ENCODE measurements at regions of chr19 and their contacts with region 1.

Region 1: DNA sequence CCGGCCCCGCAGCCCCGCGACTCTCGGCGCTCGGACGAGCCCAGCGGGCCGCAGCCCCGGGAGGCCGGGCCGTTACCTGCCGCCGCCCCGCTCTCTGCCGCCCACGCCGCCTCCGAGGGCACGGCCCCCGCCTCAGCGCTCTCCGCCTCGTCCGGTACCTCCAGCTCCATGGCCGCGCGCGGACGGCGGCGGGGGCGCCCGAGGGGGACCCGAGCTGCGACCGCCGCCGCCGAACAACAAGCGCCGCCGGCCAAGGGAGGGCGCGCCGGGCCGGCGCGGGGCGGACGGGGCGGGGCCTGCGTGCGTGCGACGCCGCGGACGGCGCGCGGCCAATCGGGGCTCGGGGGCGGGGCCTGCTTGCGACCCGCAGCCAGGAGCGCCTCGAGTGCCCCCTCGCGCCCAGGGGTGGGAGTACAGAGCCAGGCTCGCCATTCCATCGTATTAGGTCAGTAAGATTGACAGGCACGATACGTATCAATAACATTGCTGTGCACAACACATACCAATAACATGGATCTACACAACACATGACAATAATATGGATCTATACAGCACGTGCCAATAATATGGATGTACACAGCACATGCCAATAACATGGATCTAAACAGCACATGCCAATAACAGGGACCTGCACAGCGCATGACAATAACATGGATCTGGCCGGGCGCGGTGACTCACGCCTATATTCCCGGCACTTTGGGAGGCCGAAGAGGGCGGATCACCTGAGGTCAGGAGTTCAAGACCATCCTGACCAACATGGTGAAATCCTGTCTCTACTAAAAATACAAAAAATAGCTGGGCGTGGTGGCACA is at the start of gene PIP5K1C:
- DNase-seq: peak; percentile 44
- H3K4me3 ChIP-seq: peak within 1 kb of the TSS; percentile 79 to 98 (median 96)
- H3K27ac ChIP-seq: peak within 1 kb of the TSS; percentile 85 to 94 (median 89)
- H3K4me1 ChIP-seq: peaks cover 17 to 40% (median 18%) of the 10 kb centered on the region in 3 donors
- H3K27me3 ChIP-seq: no peaks in the 10 kb centered on the region
- CTCF ChIP-seq: peak; percentile 61 to 93 (median 85)
- POLR2A ChIP-seq: peak in 2 of 4 donors; percentile 42 to 63
- total RNA-seq, gene PIP5K1C: 12.0 to 25.3 (median 15.2) TPM

Region 2: GRCh38 chr19:3544742-3545668 is 155.4 kb before region 1 on chr19:
- intact Hi-C with region 1: loop called (anchors 10 kb)
- DNase-seq: no peak
- H3K4me3 ChIP-seq: no peak overlapping the region
- H3K27ac ChIP-seq: no peak overlapping the region
- H3K4me1 ChIP-seq: peaks cover 0 to 19% (median 0%) of the 10 kb centered on the region in 3 donors
- H3K27me3 ChIP-seq: no peaks in the 10 kb centered on the region
- CTCF ChIP-seq: peak; percentile 61 to 94 (median 89)
- POLR2A ChIP-seq: no peak

Region 3: DNA sequence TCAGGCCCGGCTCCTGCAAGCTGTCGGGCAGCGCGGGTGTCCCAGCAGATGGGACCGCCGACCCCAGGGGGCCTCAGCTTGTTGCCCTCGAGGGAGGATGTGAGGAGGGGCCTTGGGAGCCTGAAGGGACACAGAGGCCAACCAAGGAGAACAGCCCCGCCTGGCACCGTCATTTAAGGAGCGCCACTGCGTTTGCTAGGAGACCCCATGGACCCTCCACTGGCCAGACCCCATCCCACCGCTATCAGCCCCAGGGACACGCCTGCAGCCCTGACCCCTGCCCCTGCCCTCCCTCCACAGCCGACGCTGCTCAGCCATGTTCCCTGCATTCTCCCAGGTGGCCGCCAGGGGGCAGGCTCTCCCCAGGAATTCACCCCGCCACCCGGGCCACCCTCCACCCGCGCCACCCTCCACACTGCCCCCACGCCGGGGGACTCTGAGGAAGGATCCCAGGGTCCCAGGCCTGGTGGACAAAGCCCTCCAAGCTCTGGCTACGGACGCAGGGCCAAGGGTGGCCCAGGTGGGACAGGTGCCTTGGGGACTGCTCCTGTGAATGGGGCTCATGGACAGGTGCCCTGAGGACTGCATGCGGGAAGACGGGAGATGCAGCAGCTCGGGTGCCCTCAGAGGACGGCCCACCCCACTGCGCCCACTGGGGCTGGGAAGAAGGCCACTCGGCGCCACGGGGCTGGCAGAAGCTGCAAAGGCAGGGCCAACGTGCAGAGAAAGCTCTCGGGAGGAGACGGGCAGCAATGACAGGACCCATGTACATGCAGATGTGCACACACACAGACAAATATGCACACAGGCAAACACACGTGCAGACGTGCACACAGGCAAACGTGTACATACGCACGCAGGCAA is 34.5 kb before region 1 on chr19:
- intact Hi-C with region 1: loop called (anchors 5 kb)
- DNase-seq: no peak
- H3K4me3 ChIP-seq: no peak overlapping the region
- H3K27ac ChIP-seq: peak overlapping the region in 2 of 4 donors; percentile 22 to 26
- H3K4me1 ChIP-seq: peaks cover 22 to 47% (median 32%) of the 10 kb centered on the region in 3 donors
- H3K27me3 ChIP-seq: no peaks in the 10 kb centered on the region
- CTCF ChIP-seq: peak; percentile 92 to 99 (median 94)
- POLR2A ChIP-seq: no peak